Natural killer cell (primary cell): ENCODE measurements at regions of chr11 and their contacts with region 1.

Region 1: DNA sequence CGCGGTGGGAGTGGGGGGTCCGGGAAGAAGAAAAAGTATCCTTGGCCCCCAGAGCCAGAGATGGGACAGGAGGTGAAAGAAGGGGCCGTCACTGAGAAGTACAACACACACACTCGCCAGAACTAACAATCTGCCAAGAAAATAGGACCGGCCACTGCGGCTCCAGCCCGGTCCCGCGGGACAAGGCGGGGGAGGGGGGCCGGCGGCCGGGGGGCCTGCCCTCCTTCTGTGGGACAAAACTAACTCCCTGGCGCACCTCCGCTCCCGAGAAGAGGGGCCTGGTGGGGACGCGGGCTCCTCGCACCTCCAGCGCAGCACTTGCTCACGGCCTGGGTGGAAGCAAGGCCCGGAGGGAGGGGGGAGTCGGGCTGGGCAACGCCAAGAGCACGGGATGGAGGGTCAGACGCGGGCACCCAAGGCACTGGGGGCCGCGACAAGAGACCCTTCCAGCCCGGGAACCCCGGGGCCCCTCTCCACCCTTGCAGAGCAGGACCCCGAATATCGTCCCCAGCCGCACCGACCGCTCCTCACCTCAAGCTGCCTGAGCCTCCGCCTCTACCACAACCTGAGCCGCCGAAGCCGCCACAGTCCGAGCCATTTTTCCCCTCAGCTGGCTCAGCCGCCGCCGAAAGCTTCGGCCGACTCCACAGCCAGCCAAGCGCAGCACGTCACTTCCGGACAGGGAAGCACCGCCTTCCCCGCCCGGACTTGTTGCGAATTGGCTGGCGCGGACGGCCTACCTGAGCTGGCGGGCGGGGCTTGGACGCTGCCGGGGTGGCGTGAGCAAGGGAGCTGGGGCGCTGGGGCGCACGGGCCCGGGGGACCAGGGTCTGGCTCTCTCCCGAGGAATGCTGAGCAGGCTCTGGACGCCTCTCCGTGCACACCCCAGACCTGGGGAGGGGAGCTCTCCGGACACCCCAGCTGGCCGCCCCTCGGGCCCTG is at the start of gene PIK3C2A:
- DNase-seq: peak; percentile 95 to 96
- ATAC-seq: peak; percentile 95 to 99 (median 97)
- H3K4me3 ChIP-seq: peak within 1 kb of the TSS; percentile 85
- H3K4me3 Mint-ChIP-seq: peak within 1 kb of the TSS; percentile 97
- H3K27ac ChIP-seq: peak within 1 kb of the TSS; percentile 94
- H3K27ac Mint-ChIP-seq: peak within 1 kb of the TSS; percentile 94 to 98
- H3K4me1 ChIP-seq: peaks cover 14% of the 10 kb centered on the region
- H3K4me1 Mint-ChIP-seq: peaks cover 39 to 41% of the 10 kb centered on the region in 2 donors
- H3K27me3 ChIP-seq: no peaks in the 10 kb centered on the region
- H3K27me3 Mint-ChIP-seq: no peaks in the 10 kb centered on the region
- CTCF ChIP-seq: no peak
- total RNA-seq, gene PIK3C2A: 68.2 to 82.3 (median 69.1) TPM

Region 2: GRCh38 chr11:17077520-17078401 is 129.8 kb before region 1 on chr11 and contains the start of gene RPS13:
- intact Hi-C with region 1: loop called (anchors 5 kb)
- DNase-seq: peak; percentile 91 to 99
- ATAC-seq: peak; percentile 95 to 99 (median 97)
- H3K4me3 ChIP-seq: peak within 1 kb of the TSS; percentile 96
- H3K4me3 Mint-ChIP-seq: peak within 1 kb of the TSS; percentile 95
- H3K27ac ChIP-seq: peak within 1 kb of the TSS; percentile 92
- H3K27ac Mint-ChIP-seq: peak within 1 kb of the TSS; percentile 94 to 99
- H3K4me1 ChIP-seq: peaks cover 21% of the 10 kb centered on the region
- H3K4me1 Mint-ChIP-seq: peaks cover 42 to 44% of the 10 kb centered on the region in 2 donors
- H3K27me3 ChIP-seq: no peaks in the 10 kb centered on the region
- H3K27me3 Mint-ChIP-seq: no peaks in the 10 kb centered on the region
- CTCF ChIP-seq: no peak
- total RNA-seq, gene RPS13: 579 to 685 (median 654) TPM

Region 3: GRCh38 chr11:17164361-17165246 is 43.0 kb before region 1 on chr11:
- intact Hi-C with region 1: loop called (anchors 5 kb)
- DNase-seq: no peak
- ATAC-seq: peak; percentile 54 to 75 (median 66)
- H3K4me3 ChIP-seq: no peak overlapping the region
- H3K4me3 Mint-ChIP-seq: peak overlapping the region; percentile 71
- H3K27ac ChIP-seq: peak overlapping the region; percentile 78
- H3K27ac Mint-ChIP-seq: peak overlapping the region; percentile 84 to 96
- H3K4me1 ChIP-seq: peaks cover 42% of the 10 kb centered on the region
- H3K4me1 Mint-ChIP-seq: peaks cover 71 to 74% of the 10 kb centered on the region in 2 donors
- H3K27me3 ChIP-seq: no peaks in the 10 kb centered on the region
- H3K27me3 Mint-ChIP-seq: no peaks in the 10 kb centered on the region
- CTCF ChIP-seq: no peak

Region 4: GRCh38 chr11:17354601-17354991 is 147.0 kb after region 1 on chr11:
- intact Hi-C with region 1: loop called (anchors 5 kb)
- DNase-seq: peak; percentile 32 to 82
- ATAC-seq: peak; percentile 28 to 54 (median 30)
- H3K4me3 ChIP-seq: no peak overlapping the region
- H3K4me3 Mint-ChIP-seq: peak overlapping the region; percentile 93
- H3K27ac ChIP-seq: no peak overlapping the region
- H3K27ac Mint-ChIP-seq: peak overlapping the region; percentile 88
- H3K4me1 ChIP-seq: peaks cover 20% of the 10 kb centered on the region
- H3K4me1 Mint-ChIP-seq: peaks cover 36 to 38% of the 10 kb centered on the region in 2 donors
- H3K27me3 ChIP-seq: no peaks in the 10 kb centered on the region
- H3K27me3 Mint-ChIP-seq: no peaks in the 10 kb centered on the region
- CTCF ChIP-seq: peak; percentile 80